Caco-2 (cell line): ENCODE measurements at regions of chr2 and their contacts with region 1.

Region 1: GRCh38 chr2:240851078-240851991 is 17.3 kb upstream of the AGXT start:
- DNase-seq: peak; percentile 77 to 85
- H3K4me3 ChIP-seq: no peak overlapping the region
- H3K4me3 Mint-ChIP-seq: no peak overlapping the region
- H3K27ac Mint-ChIP-seq: no peak overlapping the region
- H3K4me1 ChIP-seq: no peaks in the 10 kb centered on the region
- H3K4me1 Mint-ChIP-seq: no peaks in the 10 kb centered on the region
- H3K27me3 ChIP-seq: no peaks in the 10 kb centered on the region
- H3K27me3 Mint-ChIP-seq: no peaks in the 10 kb centered on the region
- CTCF ChIP-seq: peak; percentile 81 to 85

Region 2: DNA sequence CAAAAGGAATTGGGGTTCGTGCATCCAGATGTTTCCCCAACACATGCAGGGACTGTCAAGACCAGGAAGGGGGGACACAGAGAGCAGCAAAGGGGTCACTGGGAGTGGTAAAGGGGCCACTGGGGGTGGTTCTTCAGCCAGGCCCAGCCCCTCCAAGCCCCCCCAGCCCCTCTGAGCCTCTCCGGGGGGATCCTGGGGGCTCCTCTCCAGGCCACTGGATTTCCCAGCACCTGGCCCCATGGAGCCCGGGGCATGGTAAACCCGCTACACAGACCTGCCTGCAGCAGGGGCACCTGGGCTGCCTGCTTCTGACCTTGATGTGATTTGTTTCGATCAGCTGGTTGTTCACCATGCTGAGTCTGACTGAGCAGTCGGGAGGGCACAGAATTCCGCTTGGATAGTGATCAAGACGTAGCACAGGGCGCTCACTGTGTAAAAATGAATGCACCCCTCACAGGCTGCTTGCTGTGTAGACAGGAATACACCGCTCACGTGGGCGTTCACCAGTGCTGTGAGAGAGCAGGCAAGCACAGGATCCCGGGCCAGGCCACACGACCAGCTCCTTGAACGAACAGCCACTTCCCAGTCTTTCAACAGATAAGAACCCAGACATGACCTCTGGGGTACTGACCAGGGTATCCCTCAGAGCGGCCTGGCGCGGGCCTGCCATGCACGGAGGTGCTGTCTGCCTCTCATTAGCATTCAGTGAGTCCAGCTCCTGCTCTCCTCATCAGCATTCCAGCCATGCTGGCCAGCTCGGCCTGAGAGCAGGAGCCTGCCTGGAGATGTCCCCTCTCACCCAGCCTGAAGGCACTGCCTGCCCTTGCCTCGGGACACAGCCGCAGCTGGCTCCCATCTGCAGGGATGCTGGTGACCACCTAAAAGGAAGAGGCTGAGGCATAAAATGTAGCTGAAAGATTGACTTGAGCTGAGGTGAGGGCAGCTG is 637.6 kb before region 1 on chr2:
- CTCF ChIA-PET with region 1: no interaction called
- POLR2A ChIA-PET with region 1: no interaction called
- intact Hi-C with region 1: no loop called
- DNase-seq: no peak
- H3K4me3 ChIP-seq: no peak overlapping the region
- H3K4me3 Mint-ChIP-seq: no peak overlapping the region
- H3K27ac Mint-ChIP-seq: no peak overlapping the region
- H3K4me1 ChIP-seq: no peaks in the 10 kb centered on the region
- H3K4me1 Mint-ChIP-seq: no peaks in the 10 kb centered on the region
- H3K27me3 ChIP-seq: no peaks in the 10 kb centered on the region
- H3K27me3 Mint-ChIP-seq: no peaks in the 10 kb centered on the region
- CTCF ChIP-seq: no peak

Region 3: GRCh38 chr2:240722796-240723735 is 128.3 kb before region 1 on chr2:
- CTCF ChIA-PET with region 1: no interaction called
- POLR2A ChIA-PET with region 1: no interaction called
- intact Hi-C with region 1: no loop called
- DNase-seq: no peak
- H3K4me3 ChIP-seq: no peak overlapping the region
- H3K4me3 Mint-ChIP-seq: no peak overlapping the region
- H3K27ac Mint-ChIP-seq: no peak overlapping the region
- H3K4me1 ChIP-seq: no peaks in the 10 kb centered on the region
- H3K4me1 Mint-ChIP-seq: no peaks in the 10 kb centered on the region
- H3K27me3 ChIP-seq: no peaks in the 10 kb centered on the region
- H3K27me3 Mint-ChIP-seq: no peaks in the 10 kb centered on the region
- CTCF ChIP-seq: no peak

Region 4: GRCh38 chr2:240819858-240820606 is 31.3 kb before region 1 on chr2 and contains the start of gene KIF1A:
- CTCF ChIA-PET with region 1: no interaction called
- POLR2A ChIA-PET with region 1: interaction called, 10 read pairs
- intact Hi-C with region 1: no loop called
- DNase-seq: peak in 1 of 2 experiments; percentile 79
- H3K4me3 ChIP-seq: peak within 1 kb of the TSS; percentile 27
- H3K4me3 Mint-ChIP-seq: peak within 1 kb of the TSS; percentile 70
- H3K27ac Mint-ChIP-seq: no peak within 1 kb of the TSS
- H3K4me1 ChIP-seq: no peaks in the 10 kb centered on the region
- H3K4me1 Mint-ChIP-seq: no peaks in the 10 kb centered on the region
- H3K27me3 ChIP-seq: no peaks in the 10 kb centered on the region
- H3K27me3 Mint-ChIP-seq: peaks cover 21% of the 10 kb centered on the region
- CTCF ChIP-seq: no peak
- total RNA-seq, gene KIF1A: 29.8 and 33.1 TPM in 2 replicates

Region 5: GRCh38 chr2:240840435-240841080 is 10.8 kb before region 1 on chr2:
- CTCF ChIA-PET with region 1: interaction called, 12 read pairs
- POLR2A ChIA-PET with region 1: no interaction called
- intact Hi-C with region 1: no loop called
- DNase-seq: peak; percentile 78 to 81
- H3K4me3 ChIP-seq: no peak overlapping the region
- H3K4me3 Mint-ChIP-seq: no peak overlapping the region
- H3K27ac Mint-ChIP-seq: no peak overlapping the region
- H3K4me1 ChIP-seq: no peaks in the 10 kb centered on the region
- H3K4me1 Mint-ChIP-seq: no peaks in the 10 kb centered on the region
- H3K27me3 ChIP-seq: no peaks in the 10 kb centered on the region
- H3K27me3 Mint-ChIP-seq: peaks cover 15% of the 10 kb centered on the region
- CTCF ChIP-seq: peak; percentile 66 to 69

Region 6: DNA sequence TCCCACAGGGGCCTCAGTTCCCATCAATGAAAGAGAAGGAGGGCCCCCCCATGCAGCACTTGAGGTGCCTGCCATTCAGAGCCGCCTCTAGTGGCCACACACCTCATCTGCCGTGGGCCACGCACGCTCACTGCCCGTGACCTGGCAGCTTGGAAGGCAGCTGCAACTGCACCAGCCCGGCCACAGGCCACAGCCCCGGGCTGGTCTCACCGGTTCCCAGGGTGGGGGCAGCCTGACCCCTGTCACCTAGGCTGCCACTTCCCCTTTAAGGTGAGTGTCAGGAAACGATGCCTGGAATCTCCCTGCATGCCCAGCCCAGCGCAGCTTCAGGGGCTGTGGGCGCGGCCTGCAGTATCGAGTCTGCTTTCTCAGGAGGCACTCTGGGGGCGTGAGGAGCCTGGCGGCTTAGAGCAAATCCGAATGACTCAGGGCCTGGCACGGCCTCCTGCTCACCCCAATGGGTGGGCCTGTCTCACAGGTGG is 42.1 kb after region 1 on chr2:
- CTCF ChIA-PET with region 1: interaction called, 12 read pairs
- POLR2A ChIA-PET with region 1: no interaction called
- intact Hi-C with region 1: loop called (anchors 2 kb)
- DNase-seq: peak; percentile 75 to 84
- H3K4me3 ChIP-seq: peak overlapping the region; percentile 61
- H3K4me3 Mint-ChIP-seq: peak overlapping the region; percentile 81
- H3K27ac Mint-ChIP-seq: peak overlapping the region; percentile 85
- H3K4me1 ChIP-seq: peaks cover 33% of the 10 kb centered on the region
- H3K4me1 Mint-ChIP-seq: peaks cover 13% of the 10 kb centered on the region
- H3K27me3 ChIP-seq: no peaks in the 10 kb centered on the region
- H3K27me3 Mint-ChIP-seq: no peaks in the 10 kb centered on the region
- CTCF ChIP-seq: peak in 1 of 2 experiments; percentile 3

Region 7: GRCh38 chr2:240933048-240933965 is 82.0 kb after region 1 on chr2:
- CTCF ChIA-PET with region 1: no interaction called
- POLR2A ChIA-PET with region 1: no interaction called
- intact Hi-C with region 1: no loop called
- DNase-seq: no peak
- H3K4me3 ChIP-seq: no peak overlapping the region
- H3K4me3 Mint-ChIP-seq: no peak overlapping the region
- H3K27ac Mint-ChIP-seq: no peak overlapping the region
- H3K4me1 ChIP-seq: no peaks in the 10 kb centered on the region
- H3K4me1 Mint-ChIP-seq: no peaks in the 10 kb centered on the region
- H3K27me3 ChIP-seq: no peaks in the 10 kb centered on the region
- H3K27me3 Mint-ChIP-seq: peaks cover 4% of the 10 kb centered on the region
- CTCF ChIP-seq: no peak

Region 8: GRCh38 chr2:240989451-240990265 is 138.3 kb after region 1 on chr2:
- CTCF ChIA-PET with region 1: interaction called, 4 read pairs
- POLR2A ChIA-PET with region 1: no interaction called
- intact Hi-C with region 1: loop called (anchors 1 kb)
- DNase-seq: peak; percentile 51 to 64
- H3K4me3 ChIP-seq: no peak overlapping the region
- H3K4me3 Mint-ChIP-seq: no peak overlapping the region
- H3K27ac Mint-ChIP-seq: no peak overlapping the region
- H3K4me1 ChIP-seq: no peaks in the 10 kb centered on the region
- H3K4me1 Mint-ChIP-seq: no peaks in the 10 kb centered on the region
- H3K27me3 ChIP-seq: no peaks in the 10 kb centered on the region
- H3K27me3 Mint-ChIP-seq: no peaks in the 10 kb centered on the region
- CTCF ChIP-seq: peak; percentile 52 to 73

Region 9: DNA sequence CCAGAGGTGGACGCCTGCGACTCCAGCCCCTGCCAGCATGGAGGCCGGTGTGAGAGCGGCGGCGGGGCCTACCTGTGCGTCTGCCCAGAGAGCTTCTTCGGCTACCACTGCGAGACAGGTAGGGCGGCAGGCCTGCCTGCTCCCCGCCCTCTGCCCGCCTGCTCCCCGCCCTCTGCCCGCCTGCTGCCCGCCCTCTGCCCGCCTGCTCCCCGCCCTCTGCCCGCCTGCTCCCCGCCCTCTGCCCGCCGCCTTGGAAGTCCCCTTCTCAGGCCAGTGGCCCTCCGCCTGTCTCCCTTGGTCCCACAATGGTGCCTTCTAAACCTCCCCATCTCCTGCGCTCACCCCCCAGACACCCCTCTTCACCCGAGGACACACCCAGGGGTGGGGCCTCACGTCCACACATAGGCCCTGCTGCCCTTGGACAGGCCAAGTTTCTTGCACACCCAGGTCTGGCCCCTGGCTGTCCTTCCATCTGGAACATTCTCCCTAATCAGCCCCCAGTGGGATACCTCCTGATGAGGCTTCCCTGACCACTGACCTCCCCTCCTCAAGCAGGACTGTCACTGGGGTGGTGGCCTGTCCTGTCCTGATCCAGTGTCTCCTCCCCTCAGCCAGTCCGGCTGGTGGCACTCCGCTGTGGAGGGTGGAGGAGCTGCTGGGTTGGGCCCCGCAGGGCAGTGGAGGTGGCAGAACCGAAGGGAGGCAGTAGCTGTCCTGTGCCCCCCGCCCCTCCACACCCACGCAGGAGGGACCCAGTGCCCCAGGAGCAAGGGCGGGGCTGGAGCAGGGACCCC is 212.9 kb after region 1 on chr2:
- CTCF ChIA-PET with region 1: no interaction called
- POLR2A ChIA-PET with region 1: no interaction called
- intact Hi-C with region 1: loop called (anchors 5 kb)
- DNase-seq: peak in 1 of 2 experiments; percentile 28
- H3K4me3 ChIP-seq: peak overlapping the region; percentile 22
- H3K4me3 Mint-ChIP-seq: peak overlapping the region; percentile 62
- H3K27ac Mint-ChIP-seq: no peak overlapping the region
- H3K4me1 ChIP-seq: no peaks in the 10 kb centered on the region
- H3K4me1 Mint-ChIP-seq: no peaks in the 10 kb centered on the region
- H3K27me3 ChIP-seq: no peaks in the 10 kb centered on the region
- H3K27me3 Mint-ChIP-seq: peaks cover 6% of the 10 kb centered on the region
- CTCF ChIP-seq: no peak

Region 10: GRCh38 chr2:241081643-241082340 is 230.5 kb after region 1 on chr2:
- CTCF ChIA-PET with region 1: no interaction called
- POLR2A ChIA-PET with region 1: no interaction called
- intact Hi-C with region 1: loop called (anchors 1 kb)
- DNase-seq: no peak
- H3K4me3 ChIP-seq: no peak overlapping the region
- H3K4me3 Mint-ChIP-seq: no peak overlapping the region
- H3K27ac Mint-ChIP-seq: no peak overlapping the region
- H3K4me1 ChIP-seq: no peaks in the 10 kb centered on the region
- H3K4me1 Mint-ChIP-seq: no peaks in the 10 kb centered on the region
- H3K27me3 ChIP-seq: no peaks in the 10 kb centered on the region
- H3K27me3 Mint-ChIP-seq: no peaks in the 10 kb centered on the region
- CTCF ChIP-seq: no peak